Thyroid gland (tissue), 4 donors: ENCODE measurements at regions of chr19 and their contacts with region 1.

Region 1: DNA sequence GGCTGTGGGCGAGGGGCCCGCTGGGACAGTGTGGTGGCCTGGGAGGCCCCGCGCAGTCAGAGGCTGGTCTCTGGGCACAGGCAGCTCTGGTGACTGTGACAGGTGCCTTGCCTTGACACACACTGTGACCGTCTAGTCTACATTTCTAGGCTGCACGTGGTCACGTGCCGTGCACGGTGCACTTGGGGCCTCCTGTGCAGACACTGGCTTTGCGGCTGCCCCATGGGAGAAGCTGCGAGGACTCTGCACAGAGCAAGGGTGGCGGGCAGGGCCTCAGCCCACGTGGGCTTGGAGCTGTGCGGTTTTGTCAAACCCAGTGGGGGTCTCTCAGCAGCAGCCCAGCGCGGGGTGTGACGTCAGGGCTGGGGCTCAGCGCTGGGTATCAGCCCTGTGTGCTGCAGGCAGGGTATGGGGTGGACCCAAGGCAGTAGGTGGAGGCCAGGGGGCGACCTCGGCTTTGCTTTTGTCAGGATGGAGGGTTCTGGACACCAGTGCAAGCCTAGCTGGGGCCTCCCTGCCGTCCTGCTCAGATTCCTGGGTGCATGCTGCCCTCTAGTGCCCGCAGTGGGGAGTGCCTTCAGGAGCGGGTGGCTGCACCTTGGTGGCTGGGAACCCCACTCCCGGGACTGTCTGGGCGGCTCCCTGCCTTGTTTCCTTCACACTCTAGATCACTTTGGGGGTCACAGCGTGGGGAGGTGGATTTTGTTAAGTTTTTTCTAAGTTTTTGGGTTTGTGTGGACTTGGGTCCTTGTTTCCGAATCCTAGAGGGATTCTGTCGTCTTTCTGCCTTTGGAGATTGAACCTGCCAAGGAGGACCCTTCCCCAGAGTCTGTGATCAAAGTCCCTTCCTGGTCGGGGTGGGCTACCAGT is 62.6 kb downstream of the KDM4B start:
- DNase-seq: peak; percentile 79 to 84
- H3K4me3 ChIP-seq: no peak overlapping the region
- H3K27ac ChIP-seq: peak overlapping the region in 1 of 3 donors; percentile 23
- H3K4me1 ChIP-seq: peaks cover 24 to 30% of the 10 kb centered on the region in 2 donors
- H3K27me3 ChIP-seq: no peaks in the 10 kb centered on the region
- CTCF ChIP-seq: peak; percentile 72 to 96 (median 91)
- POLR2A ChIP-seq: no peak

Region 2: GRCh38 chr19:4873930-4874329 is 157.5 kb before region 1 on chr19:
- intact Hi-C with region 1: loop called (anchors 2 kb)
- DNase-seq: no peak
- H3K4me3 ChIP-seq: no peak overlapping the region
- H3K27ac ChIP-seq: no peak overlapping the region
- H3K4me1 ChIP-seq: no peaks in the 10 kb centered on the region
- H3K27me3 ChIP-seq: no peaks in the 10 kb centered on the region
- CTCF ChIP-seq: no peak
- POLR2A ChIP-seq: no peak

Region 3: DNA sequence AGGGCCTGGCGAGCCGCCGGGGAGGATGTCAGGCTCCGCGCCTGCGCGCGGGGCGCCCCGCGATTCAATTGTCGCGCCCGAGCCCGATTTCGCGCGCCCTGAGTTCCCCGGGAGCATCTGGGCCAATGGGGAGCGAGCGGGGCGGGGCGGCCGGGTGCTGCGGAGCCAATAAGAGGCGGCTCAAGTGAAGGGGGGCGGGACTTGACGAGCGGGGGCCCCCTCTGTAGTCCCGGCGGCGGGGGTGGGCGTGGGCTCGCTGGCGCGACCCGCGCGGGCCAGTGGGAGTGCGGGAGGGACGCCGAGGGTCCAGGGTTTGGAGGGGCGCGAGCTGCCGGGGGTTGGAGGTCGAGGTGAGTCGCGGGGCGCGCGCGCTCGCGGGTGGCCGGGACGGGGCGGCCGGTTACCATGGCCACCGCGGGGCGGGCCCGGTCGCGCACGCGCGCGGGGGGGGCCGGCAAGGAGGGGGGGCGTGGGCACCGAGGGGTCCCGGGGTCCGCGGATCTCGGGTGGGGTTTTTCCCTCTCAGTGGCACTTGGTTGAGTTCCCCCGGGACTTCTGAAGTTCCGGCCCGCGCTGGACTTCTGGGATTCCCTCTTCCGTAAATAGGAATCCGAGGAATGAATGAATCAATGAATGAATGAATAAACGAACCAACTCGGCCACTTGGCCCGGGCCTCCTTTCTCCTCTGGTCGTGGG is 121.4 kb before region 1 on chr19:
- intact Hi-C with region 1: loop called (anchors 2 kb)
- DNase-seq: peak; percentile 90 to 93
- H3K4me3 ChIP-seq: peak overlapping the region in 2 of 3 donors; percentile 31 to 51
- H3K27ac ChIP-seq: no peak overlapping the region
- H3K4me1 ChIP-seq: peaks cover 13 to 27% of the 10 kb centered on the region in 2 donors
- H3K27me3 ChIP-seq: no peaks in the 10 kb centered on the region
- CTCF ChIP-seq: no peak
- POLR2A ChIP-seq: no peak

Region 4: GRCh38 chr19:4951656-4952055 is 79.8 kb before region 1 on chr19:
- intact Hi-C with region 1: no loop called
- DNase-seq: no peak
- H3K4me3 ChIP-seq: no peak overlapping the region
- H3K27ac ChIP-seq: no peak overlapping the region
- H3K4me1 ChIP-seq: no peaks in the 10 kb centered on the region
- H3K27me3 ChIP-seq: no peaks in the 10 kb centered on the region
- CTCF ChIP-seq: no peak
- POLR2A ChIP-seq: no peak

Region 5: DNA sequence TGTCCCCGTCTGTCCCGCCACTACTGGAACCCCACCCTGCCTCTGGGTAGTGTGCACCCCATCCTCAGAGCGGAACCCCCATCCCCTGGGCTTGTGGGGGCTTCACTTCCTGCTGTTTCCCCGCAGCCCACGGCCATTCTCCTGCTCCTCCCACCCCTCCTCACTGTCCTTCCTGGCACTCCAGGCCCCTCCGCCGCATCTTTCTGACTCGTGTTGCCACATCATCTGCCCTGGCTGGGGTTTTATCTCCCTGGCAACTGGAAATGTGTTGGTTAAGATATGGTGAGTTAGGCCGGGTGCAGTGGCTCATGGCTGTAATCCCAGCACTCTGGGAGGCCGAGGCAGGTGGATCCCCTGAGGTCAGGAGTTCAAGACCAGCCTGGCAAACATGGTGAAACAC is 25.3 kb before region 1 on chr19:
- intact Hi-C with region 1: no loop called
- DNase-seq: no peak
- H3K4me3 ChIP-seq: no peak overlapping the region
- H3K27ac ChIP-seq: peak overlapping the region in 2 of 3 donors; percentile 16 to 95
- H3K4me1 ChIP-seq: peaks cover 70 to 85% of the 10 kb centered on the region in 2 donors
- H3K27me3 ChIP-seq: no peaks in the 10 kb centered on the region
- CTCF ChIP-seq: no peak
- POLR2A ChIP-seq: no peak